HepG2 (cell line): ENCODE measurements at regions of chr11 and their contacts with region 1.

Region 1: GRCh38 chr11:45896422-45896984 is 10.6 kb downstream of the FREY1 start:
- DNase-seq: no peak
- ATAC-seq: peak; percentile 49
- H3K4me3 ChIP-seq: no peak overlapping the region
- H3K27ac ChIP-seq: no peak overlapping the region
- H3K4me1 ChIP-seq: peaks cover 49% of the 10 kb centered on the region
- H3K27me3 ChIP-seq: peaks cover 0 to 21% of the 10 kb centered on the region in 2 experiments; a peak in 1 of 5 replicates
- CTCF ChIP-seq: no peak
- EP300 ChIP-seq: no peak
- POLR2A ChIP-seq: no peak
- RAD21 ChIP-seq: no peak

Region 2: DNA sequence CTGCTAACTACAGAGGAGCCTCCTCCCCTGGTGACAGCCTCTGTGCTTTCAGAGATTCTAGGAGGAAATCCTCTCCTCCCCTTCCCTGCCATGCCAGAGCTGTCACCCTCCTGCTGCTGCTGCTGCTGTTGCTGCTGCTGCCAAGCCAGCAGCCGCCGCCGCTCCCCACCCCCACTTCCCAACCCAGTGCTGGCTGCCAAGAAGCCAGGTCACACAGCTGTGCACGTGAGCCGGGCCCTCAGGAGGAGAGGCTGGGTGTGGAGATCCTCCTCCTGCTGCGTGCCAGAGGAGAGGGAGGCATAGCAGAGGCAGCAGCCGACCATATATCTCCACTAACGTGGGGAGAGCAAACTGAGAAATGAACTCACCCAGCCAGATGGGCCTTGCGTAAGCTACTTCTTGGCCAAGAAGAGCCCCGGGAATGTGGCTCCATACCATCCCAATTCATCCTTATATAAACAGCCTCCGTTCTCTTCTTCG is 36.8 kb before region 1 on chr11:
- CTCF ChIA-PET with region 1: no interaction called
- POLR2A ChIA-PET with region 1: no interaction called
- in situ Hi-C with region 1: no loop called
- intact Hi-C with region 1: loop called (anchors 1 kb)
- DNase-seq: no peak
- ATAC-seq: no peak
- H3K4me3 ChIP-seq: no peak overlapping the region
- H3K27ac ChIP-seq: no peak overlapping the region
- H3K4me1 ChIP-seq: no peaks in the 10 kb centered on the region
- H3K27me3 ChIP-seq: no peaks in the 10 kb centered on the region
- CTCF ChIP-seq: no peak
- EP300 ChIP-seq: no peak
- POLR2A ChIP-seq: no peak
- RAD21 ChIP-seq: no peak